ENCODE measurements at regions of chr19 and their contacts with region 1.

Region 1: DNA sequence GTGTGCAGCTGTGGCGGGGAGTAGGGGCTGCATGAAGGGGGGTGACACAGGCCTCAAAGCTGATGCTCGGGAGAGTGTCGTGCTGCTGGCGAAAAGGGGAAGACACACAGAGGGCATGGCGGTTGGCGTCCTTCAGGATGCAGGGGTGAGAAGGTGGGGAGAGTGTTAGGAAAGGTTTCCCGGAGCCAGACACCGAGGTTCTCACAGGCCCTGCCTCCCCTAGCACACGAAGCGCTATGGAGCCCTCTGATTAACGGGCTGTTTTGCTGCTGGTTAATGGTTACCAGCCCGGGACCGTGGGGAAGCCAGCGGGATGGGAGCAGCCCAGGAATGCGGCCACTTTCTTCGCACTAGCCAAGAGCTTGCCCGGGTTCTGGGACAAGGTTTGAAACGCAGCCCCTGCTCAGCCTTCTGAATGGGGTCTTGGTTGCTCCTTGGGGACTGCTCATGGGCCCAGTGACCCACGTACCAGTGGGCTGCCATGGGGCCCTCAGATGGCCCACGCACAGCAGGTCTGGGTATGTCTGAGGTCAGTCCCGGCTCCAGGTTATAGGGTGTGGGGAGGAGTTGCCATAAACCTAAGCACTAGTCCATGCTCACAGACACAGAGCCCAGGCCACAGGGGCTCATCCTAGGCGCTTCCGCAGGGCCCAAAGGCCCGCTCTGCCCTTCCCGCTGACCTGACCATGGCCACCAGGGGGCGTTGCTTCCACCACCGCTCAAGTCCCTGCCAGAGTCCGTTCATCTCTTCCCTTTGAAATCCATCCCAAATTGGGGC is 31.3 kb upstream of the ISYNA1 start:
- DNase-seq: peak; percentile 48 to 81
- ATAC-seq: peak; percentile 65 to 84
- H3K4me3 ChIP-seq: no peak overlapping the region
- H3K27ac ChIP-seq: peak overlapping the region; percentile 75 to 92
- H3K4me1 ChIP-seq: peaks cover 49% of the 10 kb centered on the region
- CTCF ChIP-seq: peak; percentile 72
- EP300 ChIP-seq: no peak
- POLR2A ChIP-seq: no peak
- RAD21 ChIP-seq: peak; percentile 38 to 42; a peak in 3 of 5 replicates

Region 2: GRCh38 chr19:18388100-18388959 is 80.9 kb before region 1 on chr19:
- CTCF ChIA-PET with region 1: no interaction called
- POLR2A ChIA-PET with region 1: no interaction called
- DNase-seq: peak in 1 of 2 experiments; percentile 72
- ATAC-seq: peak in 1 of 2 experiments; percentile 32; a peak in 3 of 6 replicates
- H3K4me3 ChIP-seq: peak overlapping the region; percentile 98
- H3K27ac ChIP-seq: peak overlapping the region; percentile 97 to 99
- H3K4me1 ChIP-seq: peaks cover 26% of the 10 kb centered on the region
- CTCF ChIP-seq: peak; percentile 68
- EP300 ChIP-seq: no peak
- POLR2A ChIP-seq: no peak
- RAD21 ChIP-seq: peak; percentile 49 to 54; a peak in 4 of 5 replicates

Region 3: DNA sequence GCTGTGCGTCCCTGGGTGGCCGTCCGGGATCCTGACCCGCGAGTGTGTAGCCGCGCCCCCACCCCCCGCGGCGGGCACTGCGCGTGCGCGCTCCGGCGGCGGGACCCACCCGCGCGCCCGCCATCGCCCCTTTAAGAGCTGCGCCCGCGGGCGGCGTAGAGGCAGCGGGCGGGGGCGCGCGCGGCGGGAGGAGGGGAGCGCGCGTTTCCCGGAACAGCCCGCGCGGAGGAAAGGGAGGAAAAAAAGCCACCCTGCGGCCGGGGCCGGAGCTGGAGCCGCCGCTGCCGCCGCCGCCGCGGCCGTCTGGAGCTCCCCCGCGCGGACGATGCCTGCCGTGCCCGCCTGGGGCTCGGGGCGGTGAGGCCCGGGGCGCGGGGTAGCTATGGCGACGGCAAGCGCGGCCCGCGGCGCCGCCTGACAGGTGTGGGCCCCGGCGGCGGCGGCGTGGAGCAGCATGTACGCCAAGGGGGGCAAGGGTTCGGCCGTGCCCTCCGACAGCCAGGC is 50.0 kb before region 1 on chr19 and contains the start of gene SSBP4:
- CTCF ChIA-PET with region 1: no interaction called
- POLR2A ChIA-PET with region 1: no interaction called
- DNase-seq: peak in 1 of 2 experiments; percentile 79
- ATAC-seq: peak in 1 of 2 experiments; percentile 25; a peak in 2 of 6 replicates
- H3K4me3 ChIP-seq: peak within 1 kb of the TSS; percentile 77
- H3K27ac ChIP-seq: peak within 1 kb of the TSS; percentile 96 to 100
- H3K4me1 ChIP-seq: peaks cover 52% of the 10 kb centered on the region
- CTCF ChIP-seq: peak; percentile 32; the same call in 2 of the 3 replicates
- EP300 ChIP-seq: no peak
- POLR2A ChIP-seq: no peak
- RAD21 ChIP-seq: no peak
- polyA plus RNA-seq, gene SSBP4: 5.4 and 6.9 TPM in 2 replicates

Region 4: DNA sequence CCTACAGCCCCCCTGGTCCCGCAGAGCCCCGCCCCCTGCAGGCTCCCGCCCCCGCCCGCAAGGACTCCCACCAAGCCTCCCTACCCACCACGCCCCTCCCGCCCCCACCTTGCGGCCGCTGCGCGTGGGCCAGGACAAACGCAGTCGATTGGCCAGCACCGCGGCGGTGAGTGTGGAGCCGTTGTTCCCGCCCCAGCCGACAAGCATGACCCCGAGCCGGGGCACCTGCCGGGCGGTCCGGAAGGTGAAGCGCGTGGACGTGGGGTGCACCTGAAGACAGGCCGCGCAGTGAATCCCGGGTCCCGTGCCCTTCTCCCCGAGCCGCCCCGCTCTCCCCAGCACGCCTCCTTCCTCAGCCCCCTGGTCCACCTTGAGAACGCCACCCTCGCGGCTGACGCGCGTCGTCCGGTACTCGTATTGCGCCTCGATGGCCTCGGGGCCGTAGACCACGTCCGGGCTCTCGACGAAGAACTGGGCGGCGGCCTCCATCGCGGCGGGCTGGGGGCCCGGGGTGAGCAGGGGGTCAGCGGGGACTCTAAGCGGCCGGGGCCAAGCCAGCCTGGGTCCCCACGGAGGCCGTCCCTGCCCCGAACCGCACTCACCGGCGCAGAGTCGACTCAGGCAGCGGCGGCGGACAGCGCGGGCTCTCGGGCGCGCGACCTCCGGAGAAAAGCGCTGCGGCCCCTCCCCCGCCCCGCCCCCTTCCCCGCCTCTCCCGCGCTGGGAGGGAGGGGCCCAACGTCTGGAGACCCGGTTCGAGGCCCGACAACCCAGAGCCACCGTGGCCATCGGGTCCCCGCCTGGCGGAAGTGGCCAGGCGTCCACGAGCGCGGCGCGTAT is 31.5 kb before region 1 on chr19 and contains the start of gene ISYNA1:
- CTCF ChIA-PET with region 1: no interaction called
- POLR2A ChIA-PET with region 1: no interaction called
- DNase-seq: peak in 1 of 2 experiments; percentile 69
- ATAC-seq: peak; percentile 30 to 62
- H3K4me3 ChIP-seq: peak within 1 kb of the TSS; percentile 76
- H3K27ac ChIP-seq: peak within 1 kb of the TSS; percentile 82 to 96
- H3K4me1 ChIP-seq: peaks cover 30% of the 10 kb centered on the region
- CTCF ChIP-seq: no peak
- EP300 ChIP-seq: no peak
- POLR2A ChIP-seq: peak; percentile 16; the same call in 1 of the 2 replicates
- RAD21 ChIP-seq: no peak
- polyA plus RNA-seq, gene ISYNA1: 17.6 and 18.0 TPM in 2 replicates

Region 5: DNA sequence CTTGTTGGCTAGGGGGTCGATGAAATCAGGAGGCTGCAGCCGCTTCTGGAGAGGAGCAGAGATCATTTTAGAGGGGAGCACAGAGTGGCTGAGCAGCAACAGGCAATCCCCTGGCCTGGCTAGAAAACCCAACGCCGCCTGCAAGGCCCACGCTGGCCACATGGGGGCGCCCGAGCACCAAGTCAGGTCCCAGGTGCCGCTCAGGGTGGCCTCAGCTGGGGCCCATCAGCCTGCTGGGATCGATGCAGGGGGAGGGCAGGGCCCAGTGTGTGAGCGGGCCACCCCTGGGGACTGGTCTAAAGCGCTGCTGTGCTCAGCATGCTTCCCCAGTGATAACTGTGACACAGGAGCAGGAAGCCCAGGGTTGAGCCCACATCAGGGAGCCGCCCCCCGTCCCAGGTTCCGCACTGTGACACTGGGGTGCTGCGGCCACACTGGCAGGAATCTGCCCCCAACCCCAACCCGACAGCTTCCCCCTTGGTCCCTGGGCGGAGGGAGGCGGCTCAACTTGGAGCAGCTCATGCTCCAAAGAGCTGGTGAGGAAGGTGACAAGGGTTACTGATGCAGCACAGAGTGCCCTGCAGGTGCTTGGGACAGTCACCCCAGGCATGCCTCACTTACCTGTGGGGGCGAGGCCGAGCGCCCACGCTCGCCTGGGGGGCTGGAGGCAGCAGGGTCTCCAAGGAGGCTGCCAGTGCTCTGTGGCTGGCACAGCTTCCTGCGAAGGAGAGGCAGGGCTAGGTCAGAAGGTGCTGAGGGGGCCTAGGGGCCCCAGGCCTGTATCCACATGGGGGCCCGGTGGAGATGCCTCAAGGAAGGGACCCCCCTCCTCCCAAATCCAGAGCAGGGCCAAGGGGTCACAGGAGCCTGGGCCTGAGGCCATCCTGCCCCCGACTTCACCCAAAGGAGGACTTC is 18.1 kb before region 1 on chr19:
- CTCF ChIA-PET with region 1: interaction called, 168 read pairs
- POLR2A ChIA-PET with region 1: no interaction called
- DNase-seq: peak in 1 of 2 experiments; percentile 64
- ATAC-seq: peak; percentile 79 to 92
- H3K4me3 ChIP-seq: no peak overlapping the region
- H3K27ac ChIP-seq: peak overlapping the region in 1 of 2 experiments; percentile 48; a peak in 1 of 6 replicates
- H3K4me1 ChIP-seq: peaks cover 11% of the 10 kb centered on the region
- CTCF ChIP-seq: peak; percentile 77
- EP300 ChIP-seq: no peak
- POLR2A ChIP-seq: no peak
- RAD21 ChIP-seq: peak; percentile 80

Region 6: GRCh38 chr19:18457483-18458331 is 11.6 kb before region 1 on chr19:
- CTCF ChIA-PET with region 1: interaction called, 168 read pairs
- POLR2A ChIA-PET with region 1: no interaction called
- DNase-seq: no peak
- ATAC-seq: no peak
- H3K4me3 ChIP-seq: no peak overlapping the region
- H3K27ac ChIP-seq: no peak overlapping the region
- H3K4me1 ChIP-seq: peaks cover 24% of the 10 kb centered on the region
- CTCF ChIP-seq: no peak
- EP300 ChIP-seq: no peak
- POLR2A ChIP-seq: no peak
- RAD21 ChIP-seq: no peak

Region 7: DNA sequence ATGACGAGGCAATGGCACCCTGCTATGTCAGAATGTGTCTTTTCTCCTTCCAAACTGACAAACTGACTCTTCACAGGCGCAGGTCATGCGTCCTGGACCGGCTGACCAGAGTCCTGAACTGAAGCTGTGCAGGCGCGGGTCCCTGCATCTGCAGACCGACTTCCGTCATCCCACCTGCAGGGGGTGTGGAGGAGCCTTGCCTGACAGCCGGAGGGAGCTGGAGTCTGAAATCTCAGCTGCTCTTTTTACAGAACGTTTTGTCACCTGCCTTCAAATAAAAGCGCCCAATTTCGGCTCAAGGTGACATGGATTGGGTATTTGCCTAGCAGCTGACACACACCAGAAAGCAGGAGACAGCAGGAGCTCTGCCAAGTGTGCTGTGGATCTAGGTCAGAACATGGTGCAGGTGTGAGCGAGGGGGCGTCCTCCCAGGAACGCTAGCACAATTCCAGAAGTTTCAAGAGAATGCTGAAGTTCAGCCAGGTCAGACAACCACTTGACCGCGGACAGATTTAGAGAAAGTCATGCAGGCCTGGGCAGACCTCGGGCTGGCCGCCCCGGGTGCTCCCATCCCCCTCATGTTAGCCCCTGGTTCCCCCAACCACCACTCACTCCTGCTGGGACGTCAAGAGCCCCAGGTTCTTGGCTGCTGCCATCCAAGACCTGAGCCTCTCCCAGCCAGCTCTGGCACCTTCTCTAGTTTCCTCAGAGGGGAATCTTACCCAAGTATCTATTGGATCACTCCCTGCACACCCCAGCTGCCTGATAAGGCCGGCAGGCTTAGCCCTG is 19.8 kb after region 1 on chr19:
- CTCF ChIA-PET with region 1: interaction called, 38 read pairs
- POLR2A ChIA-PET with region 1: no interaction called
- DNase-seq: peak; percentile 45 to 57
- ATAC-seq: peak; percentile 50 to 69; a peak in 4 of 6 replicates
- H3K4me3 ChIP-seq: no peak overlapping the region
- H3K27ac ChIP-seq: peak overlapping the region in 1 of 2 experiments; percentile 53; a peak in 1 of 6 replicates
- H3K4me1 ChIP-seq: peaks cover 29% of the 10 kb centered on the region
- CTCF ChIP-seq: no peak
- EP300 ChIP-seq: no peak
- POLR2A ChIP-seq: no peak
- RAD21 ChIP-seq: peak; percentile 28 to 36; a peak in 3 of 5 replicates

Region 8: DNA sequence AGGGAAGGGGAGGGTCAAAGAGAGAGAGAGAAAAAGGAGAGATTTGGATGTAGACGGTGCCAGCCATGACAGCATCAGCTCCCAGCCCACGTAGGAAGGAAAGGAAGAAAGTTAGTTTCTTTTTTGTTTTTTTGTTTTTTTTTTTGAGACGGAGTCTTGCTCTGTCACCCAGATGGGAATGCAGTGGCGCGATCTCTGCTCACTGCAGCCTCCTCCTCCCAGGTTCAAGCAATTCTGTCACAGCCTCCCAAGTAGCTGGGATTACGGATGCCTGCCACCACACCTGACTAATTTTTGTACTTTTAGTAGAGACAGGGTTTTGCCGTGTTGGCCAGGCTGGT is 25.0 kb after region 1 on chr19:
- CTCF ChIA-PET with region 1: interaction called, 38 read pairs
- POLR2A ChIA-PET with region 1: no interaction called
- DNase-seq: no peak
- ATAC-seq: no peak
- H3K4me3 ChIP-seq: no peak overlapping the region
- H3K27ac ChIP-seq: no peak overlapping the region
- H3K4me1 ChIP-seq: peaks cover 12% of the 10 kb centered on the region
- CTCF ChIP-seq: no peak
- EP300 ChIP-seq: no peak
- POLR2A ChIP-seq: no peak
- RAD21 ChIP-seq: no peak

Region 9: DNA sequence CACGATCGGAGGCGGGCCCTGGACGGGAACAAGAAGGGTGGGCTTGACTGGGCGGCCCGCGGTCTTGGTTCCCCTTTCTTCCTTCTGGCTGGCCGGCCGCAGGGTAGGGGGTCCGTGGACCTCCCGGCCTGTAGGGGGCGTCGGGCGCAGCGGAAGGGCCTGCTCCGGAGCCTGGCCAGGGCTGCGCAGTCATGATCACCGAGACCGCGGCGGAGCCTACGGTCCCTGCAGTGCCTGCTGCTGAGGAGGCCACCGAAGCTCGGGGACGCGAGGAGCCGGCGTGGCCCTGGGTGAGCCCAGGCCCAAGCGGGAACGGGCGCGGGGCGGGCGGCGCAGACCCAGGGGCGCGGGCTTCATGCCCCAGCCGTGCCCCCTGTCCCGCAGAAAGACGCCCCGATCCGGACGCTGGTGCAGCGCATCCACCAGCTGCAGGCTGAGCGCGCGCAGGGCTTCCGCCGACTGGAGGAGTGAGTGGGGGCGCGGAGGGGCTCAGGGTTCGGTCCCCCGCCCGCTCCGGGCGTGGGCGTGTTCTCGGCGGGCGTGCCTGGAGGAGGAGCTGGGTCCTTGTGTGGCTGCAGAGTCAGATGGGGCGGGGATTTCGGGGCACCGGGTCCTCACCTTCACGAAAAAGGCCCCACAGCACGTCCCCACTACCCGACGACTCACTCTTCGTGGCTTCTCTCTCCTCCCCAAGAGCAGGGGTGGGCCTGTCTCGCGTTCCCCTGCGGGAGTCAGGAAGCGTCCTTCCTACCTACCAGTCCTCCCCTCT is 119.5 kb after region 1 on chr19 and contains the start of gene REX1BD:
- CTCF ChIA-PET with region 1: interaction called, 11 read pairs
- POLR2A ChIA-PET with region 1: interaction called, 10 read pairs
- DNase-seq: peak in 1 of 2 experiments; percentile 83
- ATAC-seq: peak; percentile 75 to 85
- H3K4me3 ChIP-seq: peak within 1 kb of the TSS; percentile 96
- H3K27ac ChIP-seq: peak within 1 kb of the TSS; percentile 100
- H3K4me1 ChIP-seq: peaks cover 9% of the 10 kb centered on the region; the same call in 1 of the 3 replicates
- CTCF ChIP-seq: peak; percentile 74
- EP300 ChIP-seq: no peak
- POLR2A ChIP-seq: peak; percentile 80
- RAD21 ChIP-seq: no peak; a peak in 1 of 5 replicates
- polyA plus RNA-seq, gene REX1BD: 13.3 and 23.1 TPM in 2 replicates

Measured in A549 (cell line).